ENCODE measurements at regions of chr12 and their contacts with region 1.

Region 1: DNA sequence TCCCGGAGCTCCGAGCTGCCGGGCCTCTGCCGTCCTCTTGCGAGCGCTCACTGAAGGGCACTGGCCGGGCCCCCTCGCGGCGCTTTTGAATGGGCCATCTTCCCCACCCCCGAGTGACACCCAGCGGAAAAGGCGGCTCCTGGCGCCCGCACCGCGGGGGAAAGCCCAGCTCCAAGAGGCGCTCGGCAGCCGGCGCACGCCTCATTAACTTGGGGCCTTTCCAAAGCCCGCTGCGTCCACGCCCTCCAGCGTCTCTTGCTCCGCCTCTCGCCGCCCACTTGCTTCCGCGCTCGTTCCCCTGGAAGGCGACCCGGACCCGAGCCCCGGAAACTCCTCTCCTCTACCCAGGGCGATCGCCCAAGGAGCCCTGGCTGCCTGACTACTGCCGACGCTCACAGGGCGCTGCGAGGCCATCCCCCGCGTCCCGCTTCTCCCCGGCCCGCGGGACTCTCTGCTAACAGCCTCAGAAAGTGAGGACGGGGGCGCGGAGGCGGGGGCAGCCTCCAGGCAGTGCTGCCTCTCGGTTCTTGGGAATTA is at the start of gene PHLDA1:
- DNase-seq: peak; percentile 93 to 95
- ATAC-seq: peak; percentile 85 to 93 (median 85)
- H3K4me3 ChIP-seq: peak within 1 kb of the TSS; percentile 69
- H3K4me3 Mint-ChIP-seq: peak within 1 kb of the TSS; percentile 93
- H3K27ac ChIP-seq: peak within 1 kb of the TSS; percentile 89
- H3K27ac Mint-ChIP-seq: peak within 1 kb of the TSS; percentile 95 to 98
- H3K4me1 ChIP-seq: peaks cover 25% of the 10 kb centered on the region
- H3K4me1 Mint-ChIP-seq: peaks cover 35 to 36% of the 10 kb centered on the region in 2 donors
- H3K27me3 ChIP-seq: peaks cover 2% of the 10 kb centered on the region
- H3K27me3 Mint-ChIP-seq: no peaks in the 10 kb centered on the region
- CTCF ChIP-seq: peak; percentile 40
- total RNA-seq, gene PHLDA1: 11.1 to 24.0 (median 19.1) TPM

Region 2: DNA sequence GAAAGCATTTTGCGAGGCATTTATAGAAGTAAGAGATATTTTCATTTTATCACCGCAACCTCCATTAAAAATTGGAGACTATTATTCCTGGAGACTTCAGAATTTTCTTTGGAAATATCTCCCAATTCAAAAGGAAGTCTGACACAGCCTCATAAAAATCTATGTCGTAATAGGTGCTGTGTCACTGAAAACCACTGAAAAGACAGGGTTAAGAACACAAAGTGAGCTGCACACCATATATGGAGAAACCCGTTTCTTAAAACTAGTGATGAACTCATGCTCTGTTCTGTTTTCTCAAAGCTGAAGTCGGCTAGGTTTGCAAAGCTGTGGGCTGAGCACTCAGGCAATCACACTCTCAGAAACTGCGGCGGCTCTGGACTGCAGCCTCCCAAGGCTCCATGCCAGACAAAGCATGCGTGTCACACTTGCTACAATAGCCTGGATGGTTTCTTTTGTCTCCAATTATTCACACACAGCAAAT is 551.1 kb before region 1 on chr12 and contains the start of gene GLIPR1:
- intact Hi-C with region 1: loop called (anchors 2 kb)
- DNase-seq: peak; percentile 65 to 88
- ATAC-seq: peak; percentile 81 to 88 (median 83)
- H3K4me3 ChIP-seq: peak within 1 kb of the TSS; percentile 84
- H3K4me3 Mint-ChIP-seq: peak within 1 kb of the TSS; percentile 87
- H3K27ac ChIP-seq: peak within 1 kb of the TSS; percentile 90
- H3K27ac Mint-ChIP-seq: peak within 1 kb of the TSS; percentile 95 to 100
- H3K4me1 ChIP-seq: peaks cover 35% of the 10 kb centered on the region
- H3K4me1 Mint-ChIP-seq: peaks cover 70 to 72% of the 10 kb centered on the region in 2 donors
- H3K27me3 ChIP-seq: no peaks in the 10 kb centered on the region
- H3K27me3 Mint-ChIP-seq: peaks cover 0 to 3% of the 10 kb centered on the region in 2 donors
- CTCF ChIP-seq: no peak
- total RNA-seq, gene GLIPR1: 106 to 120 (median 115) TPM

Region 3: DNA sequence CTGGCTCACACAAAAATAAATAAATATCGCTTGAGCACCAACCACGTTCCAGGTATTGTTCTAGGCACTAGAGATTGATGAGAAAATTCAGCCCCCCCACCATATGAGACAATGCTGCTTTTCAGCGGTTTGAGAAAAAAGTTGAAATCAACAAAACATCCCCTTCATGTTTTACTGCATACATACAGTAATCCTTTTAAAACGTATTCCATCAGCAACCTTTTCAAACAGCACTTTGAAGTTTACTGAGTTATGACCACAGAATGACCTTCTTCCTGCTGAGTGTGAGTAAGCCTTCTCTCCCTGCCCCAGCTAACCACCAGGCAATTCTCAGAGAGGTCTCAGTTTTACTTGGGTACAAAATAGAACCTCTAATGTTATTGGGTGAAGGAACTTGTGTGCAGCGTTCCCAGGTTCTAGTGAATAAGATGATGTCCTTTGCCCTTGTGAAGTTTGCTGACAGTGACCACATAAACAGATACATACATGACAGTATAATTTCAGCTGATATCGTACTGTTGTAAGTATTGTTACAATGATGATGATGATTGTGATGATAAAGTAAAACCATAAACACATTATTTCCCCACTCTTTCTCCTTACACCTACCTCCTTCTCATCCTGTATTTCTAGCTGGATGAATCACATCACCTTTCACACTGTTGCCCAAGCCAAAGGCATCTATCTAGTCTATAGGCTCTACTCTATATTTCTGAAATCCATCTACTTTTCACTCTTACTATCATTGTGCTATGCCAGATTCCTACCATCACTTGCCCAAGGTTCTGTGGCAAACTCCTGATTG is 395.8 kb before region 1 on chr12:
- intact Hi-C with region 1: loop called (anchors 5 kb)
- DNase-seq: no peak
- ATAC-seq: peak; percentile 82 to 94 (median 92)
- H3K4me3 ChIP-seq: no peak overlapping the region
- H3K4me3 Mint-ChIP-seq: peak overlapping the region; percentile 25
- H3K27ac ChIP-seq: peak overlapping the region; percentile 7
- H3K27ac Mint-ChIP-seq: peak overlapping the region; percentile 3 to 37
- H3K4me1 ChIP-seq: peaks cover under 1% of the 10 kb centered on the region
- H3K4me1 Mint-ChIP-seq: peaks cover 17 to 23% of the 10 kb centered on the region in 2 donors
- H3K27me3 ChIP-seq: no peaks in the 10 kb centered on the region
- H3K27me3 Mint-ChIP-seq: peaks cover 0 to 4% of the 10 kb centered on the region in 2 donors
- CTCF ChIP-seq: no peak

Region 4: GRCh38 chr12:75944097-75944904 is 87.3 kb before region 1 on chr12:
- intact Hi-C with region 1: loop called (anchors 1 kb)
- DNase-seq: peak in 1 of 2 donors; percentile 52
- ATAC-seq: peak; percentile 89 to 93 (median 92)
- H3K4me3 ChIP-seq: no peak overlapping the region
- H3K4me3 Mint-ChIP-seq: peak overlapping the region; percentile 80
- H3K27ac ChIP-seq: peak overlapping the region; percentile 68
- H3K27ac Mint-ChIP-seq: peak overlapping the region; percentile 93 to 96
- H3K4me1 ChIP-seq: peaks cover 9% of the 10 kb centered on the region
- H3K4me1 Mint-ChIP-seq: peaks cover 18 to 21% of the 10 kb centered on the region in 2 donors
- H3K27me3 ChIP-seq: no peaks in the 10 kb centered on the region
- H3K27me3 Mint-ChIP-seq: no peaks in the 10 kb centered on the region
- CTCF ChIP-seq: no peak

Region 5: GRCh38 chr12:76020731-76021672 is 10.6 kb before region 1 on chr12:
- intact Hi-C with region 1: loop called (anchors 1 kb)
- DNase-seq: peak; percentile 63 to 87
- ATAC-seq: peak; percentile 74 to 86 (median 83)
- H3K4me3 ChIP-seq: no peak overlapping the region
- H3K4me3 Mint-ChIP-seq: peak overlapping the region; percentile 84
- H3K27ac ChIP-seq: peak overlapping the region; percentile 92
- H3K27ac Mint-ChIP-seq: peak overlapping the region; percentile 99 to 100
- H3K4me1 ChIP-seq: peaks cover 27% of the 10 kb centered on the region
- H3K4me1 Mint-ChIP-seq: peaks cover 36 to 37% of the 10 kb centered on the region in 2 donors
- H3K27me3 ChIP-seq: no peaks in the 10 kb centered on the region
- H3K27me3 Mint-ChIP-seq: no peaks in the 10 kb centered on the region
- CTCF ChIP-seq: no peak

Region 6: GRCh38 chr12:76055393-76055792 is 23.8 kb after region 1 on chr12:
- intact Hi-C with region 1: no loop called
- DNase-seq: no peak
- ATAC-seq: no peak
- H3K4me3 ChIP-seq: no peak overlapping the region
- H3K4me3 Mint-ChIP-seq: no peak overlapping the region
- H3K27ac ChIP-seq: no peak overlapping the region
- H3K27ac Mint-ChIP-seq: no peak overlapping the region
- H3K4me1 ChIP-seq: no peaks in the 10 kb centered on the region
- H3K4me1 Mint-ChIP-seq: no peaks in the 10 kb centered on the region
- H3K27me3 ChIP-seq: no peaks in the 10 kb centered on the region
- H3K27me3 Mint-ChIP-seq: no peaks in the 10 kb centered on the region
- CTCF ChIP-seq: no peak

Region 7: GRCh38 chr12:76074701-76075336 is 43.2 kb after region 1 on chr12:
- intact Hi-C with region 1: no loop called
- DNase-seq: no peak
- ATAC-seq: peak in 1 of 3 donors; percentile 26
- H3K4me3 ChIP-seq: no peak overlapping the region
- H3K4me3 Mint-ChIP-seq: no peak overlapping the region
- H3K27ac ChIP-seq: no peak overlapping the region
- H3K27ac Mint-ChIP-seq: no peak overlapping the region
- H3K4me1 ChIP-seq: no peaks in the 10 kb centered on the region
- H3K4me1 Mint-ChIP-seq: peaks cover 32 to 50% of the 10 kb centered on the region in 2 donors
- H3K27me3 ChIP-seq: no peaks in the 10 kb centered on the region
- H3K27me3 Mint-ChIP-seq: no peaks in the 10 kb centered on the region
- CTCF ChIP-seq: no peak

Region 8: GRCh38 chr12:76559400-76560085 is 527.9 kb after region 1 on chr12 and contains the start of gene OSBPL8:
- intact Hi-C with region 1: loop called (anchors 2 kb)
- DNase-seq: peak; percentile 95 to 96
- ATAC-seq: peak; percentile 76 to 90 (median 78)
- H3K4me3 ChIP-seq: peak within 1 kb of the TSS; percentile 99
- H3K4me3 Mint-ChIP-seq: peak within 1 kb of the TSS; percentile 95
- H3K27ac ChIP-seq: peak within 1 kb of the TSS; percentile 95
- H3K27ac Mint-ChIP-seq: peak within 1 kb of the TSS; percentile 94
- H3K4me1 ChIP-seq: peaks cover 15% of the 10 kb centered on the region
- H3K4me1 Mint-ChIP-seq: peaks cover 29 to 37% of the 10 kb centered on the region in 2 donors
- H3K27me3 ChIP-seq: no peaks in the 10 kb centered on the region
- H3K27me3 Mint-ChIP-seq: no peaks in the 10 kb centered on the region
- CTCF ChIP-seq: no peak
- total RNA-seq, gene OSBPL8: 133 to 154 (median 138) TPM